T-cell (primary cell): ENCODE measurements at regions of chr1 and their contacts with region 1.

Region 1: GRCh38 chr1:16387201-16388196 is 20.5 kb downstream of the SZRD1 start:
- DNase-seq: peak in 1 of 35 experiments; percentile 37
- ATAC-seq: peak in 2 of 4 experiments; percentile 33 to 44
- H3K4me3 ChIP-seq: peak overlapping the region in 1 of 2 donors; percentile 21
- H3K4me3 Mint-ChIP-seq: peak overlapping the region; percentile 73 to 82 (median 74)
- H3K27ac ChIP-seq: peak overlapping the region; percentile 22
- H3K27ac Mint-ChIP-seq: peak overlapping the region; percentile 81 to 90
- H3K4me1 ChIP-seq: peaks cover 28 to 74% of the 10 kb centered on the region in 2 experiments
- H3K4me1 Mint-ChIP-seq: peaks cover 74 to 86% (median 85%) of the 10 kb centered on the region in 3 donors
- H3K27me3 ChIP-seq: no peaks in the 10 kb centered on the region
- H3K27me3 Mint-ChIP-seq: no peaks in the 10 kb centered on the region

Region 2: GRCh38 chr1:16402742-16403141 is 15.2 kb after region 1 on chr1:
- CTCF ChIA-PET with region 1: no interaction called
- POLR2A ChIA-PET with region 1: no interaction called
- DNase-seq: no peak
- ATAC-seq: no peak
- H3K4me3 ChIP-seq: no peak overlapping the region
- H3K4me3 Mint-ChIP-seq: no peak overlapping the region
- H3K27ac ChIP-seq: no peak overlapping the region
- H3K27ac Mint-ChIP-seq: no peak overlapping the region
- H3K4me1 ChIP-seq: no peaks in the 10 kb centered on the region
- H3K4me1 Mint-ChIP-seq: no peaks in the 10 kb centered on the region
- H3K27me3 ChIP-seq: no peaks in the 10 kb centered on the region
- H3K27me3 Mint-ChIP-seq: no peaks in the 10 kb centered on the region

Region 3: GRCh38 chr1:16430606-16431005 is 43.1 kb after region 1 on chr1:
- CTCF ChIA-PET with region 1: no interaction called
- POLR2A ChIA-PET with region 1: no interaction called
- DNase-seq: no peak
- ATAC-seq: no peak
- H3K4me3 ChIP-seq: no peak overlapping the region
- H3K4me3 Mint-ChIP-seq: no peak overlapping the region
- H3K27ac ChIP-seq: no peak overlapping the region
- H3K27ac Mint-ChIP-seq: no peak overlapping the region
- H3K4me1 ChIP-seq: no peaks in the 10 kb centered on the region
- H3K4me1 Mint-ChIP-seq: no peaks in the 10 kb centered on the region
- H3K27me3 ChIP-seq: peaks cover 0 to 19% of the 10 kb centered on the region in 2 experiments
- H3K27me3 Mint-ChIP-seq: peaks cover 2 to 4% of the 10 kb centered on the region in 2 donors

Region 4: DNA sequence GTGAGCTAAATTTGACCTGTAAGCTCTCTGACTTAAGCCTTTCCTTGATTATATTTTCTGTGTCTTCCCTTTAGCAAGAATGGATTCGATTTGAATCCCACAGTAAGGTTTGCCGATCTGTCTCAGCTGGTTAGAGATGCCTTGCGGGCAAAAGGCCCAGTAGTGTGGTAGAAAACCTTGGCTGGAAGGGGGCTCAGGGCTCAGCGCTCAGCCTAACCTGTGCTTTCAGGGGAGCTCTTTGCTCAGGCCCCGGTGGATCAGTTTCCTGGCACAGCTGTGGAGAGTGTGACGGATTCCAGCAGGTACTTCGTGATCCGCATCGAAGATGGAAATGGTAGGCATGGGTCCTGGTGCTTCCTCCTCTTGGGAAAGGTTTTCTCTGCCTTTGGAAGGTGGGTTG is 60.1 kb after region 1 on chr1:
- CTCF ChIA-PET with region 1: interaction called in 1 of 2 experiments, 12 read pairs
- POLR2A ChIA-PET with region 1: no interaction called
- DNase-seq: no peak
- ATAC-seq: no peak
- H3K4me3 ChIP-seq: no peak overlapping the region
- H3K4me3 Mint-ChIP-seq: no peak overlapping the region
- H3K27ac ChIP-seq: no peak overlapping the region
- H3K27ac Mint-ChIP-seq: no peak overlapping the region
- H3K4me1 ChIP-seq: peaks cover 5 to 45% of the 10 kb centered on the region in 2 experiments
- H3K4me1 Mint-ChIP-seq: peaks cover 50 to 72% (median 69%) of the 10 kb centered on the region in 3 donors
- H3K27me3 ChIP-seq: no peaks in the 10 kb centered on the region
- H3K27me3 Mint-ChIP-seq: no peaks in the 10 kb centered on the region